Activated CD4-positive, alpha-beta memory T cell treated with anti-CD3 and anti-CD28 coated beads, Interleukin-2, amount 10 ng/mL, durations not matched to agents 7 days and 5 days (primary cell): ENCODE measurements at regions of chr18 and their contacts with region 1.

Region 1: DNA sequence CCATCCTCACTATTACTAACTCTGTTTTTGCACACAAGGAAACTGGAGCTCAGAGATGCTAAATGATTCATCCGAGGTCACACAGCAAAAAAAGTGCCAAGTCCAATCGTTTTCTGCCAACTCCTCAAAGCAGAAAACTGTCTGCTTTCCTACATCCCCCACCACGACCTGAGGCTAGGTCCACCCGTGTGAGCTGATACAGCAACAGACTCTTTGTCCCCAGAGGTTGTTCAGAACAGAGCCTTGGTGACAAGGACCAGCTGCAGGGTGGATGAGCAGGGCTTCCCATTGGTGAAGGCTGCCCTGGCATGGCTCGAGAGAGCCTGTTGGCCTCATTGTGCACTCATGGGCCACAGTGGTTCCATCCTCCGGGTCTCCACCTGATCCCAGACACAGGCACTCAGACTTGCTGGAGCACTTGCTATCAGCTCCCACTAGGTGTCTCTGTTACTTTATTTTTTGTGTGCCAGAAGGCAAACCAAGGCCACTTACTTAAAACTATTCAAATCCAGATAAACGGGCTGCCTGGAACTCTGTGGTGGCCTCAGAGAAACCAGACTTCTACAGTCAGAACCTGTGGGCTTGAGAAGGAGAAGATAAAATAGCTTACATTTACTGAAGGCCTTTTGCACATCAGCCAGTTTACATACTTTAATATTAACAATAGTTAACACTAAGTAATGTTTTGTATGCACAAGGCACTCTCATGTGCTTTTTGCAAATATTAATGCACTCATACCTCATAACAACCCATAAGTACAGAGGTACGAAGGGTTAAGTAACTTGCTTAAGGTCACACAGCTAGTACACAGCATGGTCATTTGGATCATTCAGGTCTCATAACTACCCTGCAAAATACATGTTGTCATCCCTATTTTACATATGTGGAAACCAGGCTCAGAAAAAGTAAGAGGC is 62.9 kb upstream of the CTIF start:
- DNase-seq: peak; percentile 29
- H3K4me3 Mint-ChIP-seq: no peak overlapping the region
- H3K27ac Mint-ChIP-seq: no peak overlapping the region
- H3K4me1 Mint-ChIP-seq: no peaks in the 10 kb centered on the region
- H3K27me3 Mint-ChIP-seq: peaks cover 44% of the 10 kb centered on the region

Region 2: DNA sequence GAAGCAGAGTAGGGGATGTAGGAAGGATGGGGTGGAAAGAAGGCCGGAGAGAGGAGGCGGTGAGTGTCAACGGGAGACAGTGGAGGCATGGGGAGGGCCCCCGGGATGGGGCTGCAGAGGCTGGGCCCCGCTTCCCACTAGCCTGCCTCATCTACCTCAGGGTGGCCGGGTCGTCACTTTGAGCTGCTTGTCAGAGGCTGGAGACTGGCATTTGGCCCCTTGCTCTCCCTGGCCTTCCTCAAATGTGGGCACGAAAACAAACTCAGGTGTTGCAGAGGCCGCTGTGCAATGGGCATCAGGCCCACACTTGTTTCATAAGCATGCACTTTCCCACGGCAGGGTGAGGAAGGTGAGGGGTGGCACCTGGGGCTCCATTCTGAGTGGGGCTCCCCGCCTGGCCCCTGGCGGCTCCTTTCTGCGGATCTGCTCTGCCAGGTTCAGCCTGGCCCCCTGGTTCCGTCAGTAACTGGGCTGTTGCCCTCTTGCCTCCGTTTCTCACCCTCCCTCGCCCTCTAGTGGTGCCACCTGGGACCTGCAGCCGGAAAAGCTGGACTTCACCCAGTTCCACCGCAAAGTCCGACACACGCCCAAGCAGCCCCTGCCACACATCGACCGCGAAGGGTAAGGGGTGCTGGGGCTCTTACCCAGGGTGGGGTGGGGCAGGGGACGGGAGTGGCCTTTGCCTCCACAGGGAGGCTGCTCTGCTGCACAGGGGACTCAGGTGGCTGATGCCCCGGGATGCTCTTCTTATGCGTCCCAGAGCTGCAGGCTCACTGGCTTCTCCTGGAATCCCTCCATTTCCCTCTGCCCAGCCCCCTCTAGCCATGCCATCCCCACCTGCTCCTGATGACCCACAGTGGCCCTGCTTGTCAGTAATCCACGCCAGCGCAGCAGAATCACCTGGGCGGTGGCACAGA is 188.3 kb after region 1 on chr18:
- CTCF ChIA-PET with region 1: interaction called, 17 read pairs
- POLR2A ChIA-PET with region 1: no interaction called
- DNase-seq: peak; percentile 57
- H3K4me3 Mint-ChIP-seq: no peak overlapping the region
- H3K27ac Mint-ChIP-seq: no peak overlapping the region
- H3K4me1 Mint-ChIP-seq: no peaks in the 10 kb centered on the region
- H3K27me3 Mint-ChIP-seq: no peaks in the 10 kb centered on the region